K562 (cell line): ENCODE measurements at regions of chr6 and their contacts with region 1.

Region 1: GRCh38 chr6:158559895-158560835 is at the start of gene TMEM181:
- DNase-seq: peak; percentile 93 to 97 (median 96)
- ATAC-seq: peak; percentile 85
- H3K4me3 ChIP-seq: peak within 1 kb of the TSS; percentile 91
- H3K27ac ChIP-seq: peak within 1 kb of the TSS; percentile 82
- H3K4me1 ChIP-seq: peaks cover 21 to 33% of the 10 kb centered on the region in 2 experiments
- H3K27me3 ChIP-seq: no peaks in the 10 kb centered on the region
- CTCF ChIP-seq: peak in 2 of 3 experiments; percentile 3 to 4; a peak in 1 of 6 replicates
- EP300 ChIP-seq: peak; percentile 36; the same call in 1 of the 2 replicates
- POLR2A ChIP-seq: peak; percentile 62
- RAD21 ChIP-seq: 0 out of 4 replicates have a peak, but pooled peaks of 1 of the 2 experiments have one; percentile 6
- polyA plus RNA-seq, gene TMEM181: 5.6 to 7.6 TPM

Region 2: GRCh38 chr6:158571826-158572652 is 11.9 kb after region 1 on chr6:
- CTCF ChIA-PET with region 1: no interaction called
- POLR2A ChIA-PET with region 1: interaction called, 7 read pairs
- in situ Hi-C with region 1: no loop called
- intact Hi-C with region 1: loop called (anchors 2 kb)
- DNase-seq: no peak
- ATAC-seq: no peak
- H3K4me3 ChIP-seq: no peak overlapping the region
- H3K27ac ChIP-seq: no peak overlapping the region
- H3K4me1 ChIP-seq: peaks cover 48 to 53% of the 10 kb centered on the region in 2 experiments
- H3K27me3 ChIP-seq: no peaks in the 10 kb centered on the region
- CTCF ChIP-seq: no peak
- EP300 ChIP-seq: no peak
- POLR2A ChIP-seq: no peak
- RAD21 ChIP-seq: no peak

Region 3: DNA sequence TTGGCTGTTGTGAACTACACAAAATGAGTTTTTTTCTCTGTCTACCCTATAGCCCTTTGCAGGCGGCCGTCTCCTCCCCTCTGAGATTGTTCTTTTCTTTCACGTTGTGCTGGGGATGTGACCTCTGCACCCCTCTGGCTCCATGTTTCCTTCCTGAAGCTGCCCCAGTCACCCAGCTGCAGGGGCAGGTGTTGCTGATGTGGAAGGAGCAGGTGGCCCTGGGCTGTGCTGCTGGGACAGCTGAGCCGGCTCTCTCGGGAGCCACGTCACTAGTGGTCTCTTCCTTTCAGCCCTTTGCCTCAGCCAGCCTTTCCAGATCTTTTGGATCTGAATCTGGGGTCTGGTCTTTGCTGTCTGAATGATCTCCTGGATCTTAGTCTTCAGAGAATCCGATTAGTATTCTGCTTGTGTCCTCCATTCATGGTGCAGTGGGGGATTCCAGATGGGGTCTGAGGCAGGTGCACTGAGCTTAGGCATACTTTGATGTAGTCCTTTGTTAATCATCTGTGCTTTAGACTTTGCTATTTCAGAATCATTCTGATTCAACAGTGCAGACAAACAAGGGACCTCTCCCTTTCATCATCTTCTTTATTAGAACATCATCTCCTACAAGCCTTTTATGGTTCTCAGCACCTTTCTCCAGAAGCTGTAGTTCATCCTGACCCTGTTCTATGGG is 31.1 kb after region 1 on chr6:
- CTCF ChIA-PET with region 1: no interaction called
- POLR2A ChIA-PET with region 1: no interaction called
- in situ Hi-C with region 1: no loop called
- intact Hi-C with region 1: no loop called
- DNase-seq: no peak
- ATAC-seq: no peak
- H3K4me3 ChIP-seq: no peak overlapping the region
- H3K27ac ChIP-seq: no peak overlapping the region
- H3K4me1 ChIP-seq: no peaks in the 10 kb centered on the region
- H3K27me3 ChIP-seq: no peaks in the 10 kb centered on the region
- CTCF ChIP-seq: no peak
- EP300 ChIP-seq: no peak
- POLR2A ChIP-seq: no peak
- RAD21 ChIP-seq: no peak

Region 4: DNA sequence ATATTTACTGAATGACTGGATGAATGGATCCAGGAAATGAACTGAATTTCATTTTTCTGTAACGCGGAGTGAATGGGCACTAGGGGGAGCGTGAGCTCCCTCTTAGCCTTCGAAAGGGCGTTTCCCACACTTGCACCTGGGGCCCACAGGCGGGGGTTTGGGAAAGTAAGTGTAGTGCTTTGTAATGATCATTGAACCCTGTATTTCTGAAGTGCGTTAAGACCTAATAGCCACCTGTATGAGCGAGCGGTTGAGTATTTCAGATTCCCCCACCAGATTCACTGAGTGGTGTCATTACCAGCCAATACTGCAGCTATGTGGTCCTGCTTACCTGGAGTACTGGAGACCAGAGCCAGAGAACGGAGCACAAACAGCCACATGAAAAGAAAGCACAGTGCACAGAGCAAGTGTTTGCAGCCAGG is 100.2 kb after region 1 on chr6:
- CTCF ChIA-PET with region 1: no interaction called
- POLR2A ChIA-PET with region 1: no interaction called
- in situ Hi-C with region 1: no loop called
- intact Hi-C with region 1: no loop called
- DNase-seq: peak; percentile 60 to 71 (median 66)
- ATAC-seq: peak; percentile 91
- H3K4me3 ChIP-seq: no peak overlapping the region
- H3K27ac ChIP-seq: no peak overlapping the region
- H3K4me1 ChIP-seq: peaks cover 0 to 2% of the 10 kb centered on the region in 2 experiments; a peak in 1 of 5 replicates
- H3K27me3 ChIP-seq: peaks cover 54 to 62% of the 10 kb centered on the region in 2 experiments
- CTCF ChIP-seq: peak; percentile 76 to 84 (median 83)
- EP300 ChIP-seq: no peak
- POLR2A ChIP-seq: no peak
- RAD21 ChIP-seq: peak; percentile 40 to 72; a peak in 3 of 4 replicates